Panc1 (cell line): ENCODE measurements at regions of chr7 and their contacts with region 1.

Region 1: GRCh38 chr7:5132539-5132938 is 57.5 kb upstream of the WIPI2 start:
- DNase-seq: no peak
- ATAC-seq: no peak
- H3K4me3 ChIP-seq: no peak overlapping the region
- H3K27ac ChIP-seq: no peak overlapping the region
- H3K4me1 ChIP-seq: no peaks in the 10 kb centered on the region
- H3K27me3 ChIP-seq: no peaks in the 10 kb centered on the region
- CTCF ChIP-seq: no peak

Region 2: DNA sequence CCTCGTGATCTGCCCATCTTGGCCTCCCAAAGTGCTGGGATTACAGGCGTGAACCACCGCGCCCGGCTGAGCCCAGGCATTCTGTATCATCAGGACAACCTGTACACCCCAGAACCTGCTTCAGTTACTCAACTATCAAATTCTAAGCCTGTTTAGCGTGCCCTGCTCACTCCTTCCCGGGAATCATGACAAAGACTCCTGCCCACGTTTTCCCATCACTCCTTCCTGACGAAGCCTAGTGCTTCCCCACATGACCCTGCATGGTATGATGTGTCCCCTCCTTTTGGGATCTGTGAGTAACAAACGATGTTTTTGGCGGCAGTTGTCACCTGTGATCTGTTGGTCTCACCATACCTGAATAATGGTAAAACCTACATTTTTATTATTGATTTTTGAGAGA is 236.8 kb before region 1 on chr7:
- CTCF ChIA-PET with region 1: no interaction called
- POLR2A ChIA-PET with region 1: interaction called, 11 read pairs
- in situ Hi-C with region 1: no loop called
- intact Hi-C with region 1: no loop called
- DNase-seq: no peak
- ATAC-seq: no peak
- H3K4me3 ChIP-seq: no peak overlapping the region
- H3K27ac ChIP-seq: no peak overlapping the region
- H3K4me1 ChIP-seq: no peaks in the 10 kb centered on the region
- H3K27me3 ChIP-seq: no peaks in the 10 kb centered on the region
- CTCF ChIP-seq: no peak

Region 3: DNA sequence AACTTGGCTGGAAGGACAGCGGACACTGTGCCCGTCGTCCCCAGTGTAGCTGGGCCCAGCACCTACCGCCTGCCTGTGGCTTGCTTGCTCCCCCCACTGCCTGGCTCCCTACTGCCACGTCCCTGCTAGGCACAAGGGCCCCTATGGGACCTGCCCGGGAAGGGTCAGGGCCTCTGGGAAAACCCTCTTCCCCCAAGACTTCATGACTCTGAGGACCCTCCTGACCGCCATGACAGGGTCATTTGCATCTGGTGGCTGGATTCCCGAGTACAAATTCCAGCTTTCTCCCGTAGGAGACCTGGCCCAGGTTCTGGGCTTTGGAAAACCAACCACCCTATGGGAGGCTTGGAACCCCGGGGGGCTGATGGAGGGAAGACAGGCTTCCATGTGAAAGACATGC is 172.2 kb before region 1 on chr7:
- CTCF ChIA-PET with region 1: no interaction called
- POLR2A ChIA-PET with region 1: no interaction called
- in situ Hi-C with region 1: no loop called
- intact Hi-C with region 1: no loop called
- DNase-seq: no peak
- ATAC-seq: 0 out of 2 replicates have a peak, but pooled peaks have one; percentile 44
- H3K4me3 ChIP-seq: no peak overlapping the region
- H3K27ac ChIP-seq: no peak overlapping the region
- H3K4me1 ChIP-seq: no peaks in the 10 kb centered on the region
- H3K27me3 ChIP-seq: peaks cover 7% of the 10 kb centered on the region
- CTCF ChIP-seq: no peak

Region 4: DNA sequence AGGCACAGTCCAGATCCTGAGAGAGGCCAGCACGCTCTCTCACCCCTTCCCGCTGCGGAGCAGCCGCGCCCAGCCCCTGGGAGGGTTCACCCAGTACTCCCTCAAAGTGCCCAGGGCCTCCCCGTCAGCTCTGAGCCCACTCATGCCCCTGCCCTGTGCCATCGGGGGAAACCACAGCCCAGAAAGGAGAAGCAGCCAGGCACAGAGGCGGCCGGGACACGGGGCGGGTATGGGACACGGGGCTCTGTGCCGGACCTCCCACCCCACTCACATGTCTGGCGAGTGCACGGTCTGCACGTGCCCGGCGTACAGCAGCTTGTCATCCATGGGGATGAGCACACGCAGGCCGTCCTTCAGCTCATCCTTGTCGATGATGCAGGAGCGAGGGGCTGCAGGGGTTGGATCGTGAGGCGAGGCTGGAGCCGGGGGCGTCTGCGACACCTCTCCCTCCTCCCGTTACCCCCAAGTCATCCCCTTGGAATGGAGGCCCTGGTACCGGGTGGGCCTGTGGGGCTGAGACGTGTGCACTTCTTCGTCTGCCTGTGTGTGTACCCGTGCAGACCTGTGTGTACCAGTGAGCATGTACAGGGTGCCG is 188.4 kb after region 1 on chr7:
- CTCF ChIA-PET with region 1: no interaction called
- POLR2A ChIA-PET with region 1: no interaction called
- in situ Hi-C with region 1: no loop called
- intact Hi-C with region 1: no loop called
- DNase-seq: no peak
- ATAC-seq: 0 out of 2 replicates have a peak, but pooled peaks have one; percentile 4
- H3K4me3 ChIP-seq: no peak overlapping the region
- H3K27ac ChIP-seq: no peak overlapping the region
- H3K4me1 ChIP-seq: no peaks in the 10 kb centered on the region
- H3K27me3 ChIP-seq: no peaks in the 10 kb centered on the region
- CTCF ChIP-seq: no peak